ENCODE measurements at regions of chr1 and their contacts with region 1.

Region 1: GRCh38 chr1:208029381-208030287 is 118.7 kb upstream of the CD34 start:
- DNase-seq: no peak
- H3K4me3 ChIP-seq: no peak overlapping the region
- H3K27me3 ChIP-seq: no peaks in the 10 kb centered on the region
- CTCF ChIP-seq: no peak

Region 2: GRCh38 chr1:208251911-208252835 is 222.5 kb after region 1 on chr1:
- CTCF ChIA-PET with region 1: interaction called, 351 read pairs
- POLR2A ChIA-PET with region 1: interaction called, 4 read pairs
- DNase-seq: no peak
- H3K4me3 ChIP-seq: no peak overlapping the region
- H3K27me3 ChIP-seq: peaks cover 5% of the 10 kb centered on the region
- CTCF ChIP-seq: peak; percentile 64